ENCODE measurements at regions of chr2 and their contacts with region 1.

Region 1: GRCh38 chr2:65647249-65647842 is 214.9 kb upstream of the SPRED2 start:
- DNase-seq: no peak
- ATAC-seq: no peak
- H3K4me3 ChIP-seq: no peak overlapping the region
- H3K27ac ChIP-seq: no peak overlapping the region
- H3K4me1 ChIP-seq: no peaks in the 10 kb centered on the region
- H3K27me3 ChIP-seq: no peaks in the 10 kb centered on the region
- CTCF ChIP-seq: no peak
- EP300 ChIP-seq: no peak
- POLR2A ChIP-seq: no peak
- RAD21 ChIP-seq: no peak

Region 2: GRCh38 chr2:65554765-65555591 is 92.4 kb before region 1 on chr2:
- CTCF ChIA-PET with region 1: no interaction called
- POLR2A ChIA-PET with region 1: no interaction called
- in situ Hi-C with region 1: no loop called
- intact Hi-C with region 1: no loop called
- DNase-seq: peak in 3 of 4 experiments; percentile 23 to 50 (median 30)
- ATAC-seq: no peak
- H3K4me3 ChIP-seq: no peak overlapping the region
- H3K27ac ChIP-seq: no peak overlapping the region
- H3K4me1 ChIP-seq: peaks cover 11 to 14% of the 10 kb centered on the region in 2 experiments; a peak in 4 of 5 replicates
- H3K27me3 ChIP-seq: no peaks in the 10 kb centered on the region
- CTCF ChIP-seq: no peak
- EP300 ChIP-seq: no peak
- POLR2A ChIP-seq: no peak
- RAD21 ChIP-seq: no peak

Region 3: GRCh38 chr2:65708131-65708530 is 60.8 kb after region 1 on chr2:
- CTCF ChIA-PET with region 1: no interaction called
- POLR2A ChIA-PET with region 1: no interaction called
- in situ Hi-C with region 1: no loop called
- intact Hi-C with region 1: no loop called
- DNase-seq: no peak
- ATAC-seq: no peak
- H3K4me3 ChIP-seq: no peak overlapping the region
- H3K27ac ChIP-seq: no peak overlapping the region
- H3K4me1 ChIP-seq: no peaks in the 10 kb centered on the region
- H3K27me3 ChIP-seq: 0 out of 5 replicates have a peak, but pooled peaks cover 2 to 5% of the 10 kb centered on the region in 2 experiments
- CTCF ChIP-seq: no peak
- EP300 ChIP-seq: no peak
- POLR2A ChIP-seq: no peak
- RAD21 ChIP-seq: no peak

Region 4: GRCh38 chr2:65901756-65902155 is 254.4 kb after region 1 on chr2:
- CTCF ChIA-PET with region 1: no interaction called
- POLR2A ChIA-PET with region 1: no interaction called
- in situ Hi-C with region 1: no loop called
- intact Hi-C with region 1: loop called (anchors 10 kb)
- DNase-seq: peak in 1 of 4 experiments; percentile 9
- ATAC-seq: peak; percentile 74
- H3K4me3 ChIP-seq: no peak overlapping the region
- H3K27ac ChIP-seq: no peak overlapping the region
- H3K4me1 ChIP-seq: no peaks in the 10 kb centered on the region; a peak in 1 of 5 replicates
- H3K27me3 ChIP-seq: no peaks in the 10 kb centered on the region
- CTCF ChIP-seq: peak; percentile 26 to 50 (median 27); a peak in 3 of 6 replicates
- EP300 ChIP-seq: no peak
- POLR2A ChIP-seq: no peak
- RAD21 ChIP-seq: peak; percentile 57 to 63

Region 5: GRCh38 chr2:66030553-66030952 is 383.2 kb after region 1 on chr2:
- CTCF ChIA-PET with region 1: no interaction called
- POLR2A ChIA-PET with region 1: no interaction called
- in situ Hi-C with region 1: no loop called
- intact Hi-C with region 1: no loop called
- DNase-seq: peak in 2 of 4 experiments; percentile 3 to 9
- ATAC-seq: no peak
- H3K4me3 ChIP-seq: no peak overlapping the region
- H3K27ac ChIP-seq: no peak overlapping the region
- H3K4me1 ChIP-seq: no peaks in the 10 kb centered on the region
- H3K27me3 ChIP-seq: no peaks in the 10 kb centered on the region
- CTCF ChIP-seq: peak in 2 of 3 experiments; percentile 16 to 27; a peak in 1 of 6 replicates
- EP300 ChIP-seq: no peak
- POLR2A ChIP-seq: no peak
- RAD21 ChIP-seq: no peak

Region 6: DNA sequence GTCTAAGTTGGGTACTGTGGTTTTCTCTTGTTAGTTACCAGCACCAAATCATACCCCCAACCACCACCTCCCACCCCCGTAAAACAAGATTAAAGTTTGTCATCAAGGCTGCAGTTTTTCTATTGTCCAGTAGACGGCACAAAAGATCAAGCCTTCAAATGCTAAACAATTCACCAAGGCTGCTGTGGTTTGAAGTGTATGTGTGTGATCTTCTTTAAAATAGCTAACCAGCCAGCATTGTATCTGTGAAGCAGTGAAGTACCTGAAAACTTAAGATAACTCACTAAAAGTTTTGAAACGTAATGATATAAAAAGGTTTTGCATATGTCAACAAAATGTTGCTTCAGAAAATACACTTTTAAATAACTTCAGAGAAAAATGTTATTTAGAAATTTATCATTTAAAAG is 781.7 kb after region 1 on chr2:
- CTCF ChIA-PET with region 1: no interaction called
- POLR2A ChIA-PET with region 1: no interaction called
- in situ Hi-C with region 1: no loop called
- intact Hi-C with region 1: loop called (anchors 10 kb)
- DNase-seq: peak; percentile 36 to 73 (median 45)
- ATAC-seq: peak; percentile 27; the same call in 2 of the 3 replicates
- H3K4me3 ChIP-seq: no peak overlapping the region
- H3K27ac ChIP-seq: no peak overlapping the region
- H3K4me1 ChIP-seq: peaks cover 0 to 30% of the 10 kb centered on the region in 2 experiments; a peak in 3 of 5 replicates
- H3K27me3 ChIP-seq: peaks cover 13 to 23% of the 10 kb centered on the region in 2 experiments; a peak in 4 of 5 replicates
- CTCF ChIP-seq: peak; percentile 77 to 90 (median 79)
- EP300 ChIP-seq: no peak
- POLR2A ChIP-seq: no peak
- RAD21 ChIP-seq: peak; percentile 97 to 98